ENCODE measurements at regions of chr6 and their contacts with region 1.

Region 1: GRCh38 chr6:137665342-137665934 is 171.2 kb upstream of the OLIG3 start:
- H3K4me3 ChIP-seq: no peak overlapping the region
- H3K27ac ChIP-seq: peak overlapping the region; percentile 59
- H3K4me1 ChIP-seq: peaks cover 20% of the 10 kb centered on the region
- CTCF ChIP-seq: no peak

Region 2: DNA sequence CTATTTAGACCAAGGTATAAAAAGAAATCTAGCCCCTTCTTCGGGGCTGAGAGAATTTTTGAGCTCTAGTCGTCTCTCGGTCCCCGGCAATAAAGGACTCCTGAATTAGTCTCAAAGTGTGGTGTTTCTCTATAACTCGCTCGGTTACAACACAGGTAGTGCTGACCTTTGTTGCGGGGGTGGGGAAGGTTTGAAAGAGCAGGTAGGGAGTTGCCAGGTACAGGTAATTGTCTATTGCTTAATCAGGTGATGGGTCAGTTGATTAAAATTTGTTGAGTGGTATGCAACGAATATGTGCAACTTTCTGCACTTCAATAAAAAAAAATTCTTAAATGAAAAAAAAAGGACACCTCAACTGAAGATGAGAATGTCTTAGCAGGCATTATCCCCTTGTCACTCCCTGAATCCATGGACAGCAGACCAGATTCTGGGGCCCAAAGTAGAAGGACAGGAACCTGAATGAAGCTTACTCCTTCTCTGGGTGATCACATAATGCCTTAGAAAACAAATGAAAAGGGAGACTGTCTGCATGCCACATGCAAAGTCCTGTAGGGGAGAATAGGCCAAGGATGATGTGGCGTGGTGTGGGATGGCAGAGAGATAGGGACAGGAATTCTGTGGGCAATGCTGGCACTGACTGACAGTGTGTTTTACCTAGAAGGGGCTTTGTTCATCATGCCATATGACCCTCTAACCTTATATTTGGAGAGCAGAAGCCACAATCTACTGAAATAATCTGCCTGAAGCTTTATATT is 13.7 kb before region 1 on chr6:
- CTCF ChIA-PET with region 1: interaction called, 10 read pairs
- POLR2A ChIA-PET with region 1: interaction called, 9 read pairs
- H3K4me3 ChIP-seq: no peak overlapping the region
- H3K27ac ChIP-seq: no peak overlapping the region
- H3K4me1 ChIP-seq: peaks cover 13% of the 10 kb centered on the region; the same call in 1 of the 2 replicates
- CTCF ChIP-seq: no peak

Region 3: GRCh38 chr6:137754366-137754765 is 88.9 kb after region 1 on chr6:
- CTCF ChIA-PET with region 1: no interaction called
- POLR2A ChIA-PET with region 1: no interaction called
- H3K4me3 ChIP-seq: no peak overlapping the region
- H3K27ac ChIP-seq: no peak overlapping the region
- H3K4me1 ChIP-seq: no peaks in the 10 kb centered on the region
- CTCF ChIP-seq: no peak